ENCODE measurements at regions of chr18 and their contacts with region 1.

Region 1: GRCh38 chr18:74495581-74496507 is at the start of gene CNDP2:
- DNase-seq: peak; percentile 96 to 97 (median 96)
- H3K4me3 ChIP-seq: peak within 1 kb of the TSS; percentile 61 to 82
- H3K4me3 Mint-ChIP-seq: peak within 1 kb of the TSS; percentile 94 to 99 (median 96)
- H3K27ac ChIP-seq: peak within 1 kb of the TSS; percentile 92
- H3K27ac Mint-ChIP-seq: peak within 1 kb of the TSS; percentile 90 to 99 (median 99)
- H3K4me1 ChIP-seq: peaks cover 37% of the 10 kb centered on the region
- H3K4me1 Mint-ChIP-seq: peaks cover 31 to 58% (median 41%) of the 10 kb centered on the region in 4 donors
- H3K27me3 ChIP-seq: no peaks in the 10 kb centered on the region
- H3K27me3 Mint-ChIP-seq: no peaks in the 10 kb centered on the region
- total RNA-seq, gene CNDP2: 145 to 153 TPM

Region 2: DNA sequence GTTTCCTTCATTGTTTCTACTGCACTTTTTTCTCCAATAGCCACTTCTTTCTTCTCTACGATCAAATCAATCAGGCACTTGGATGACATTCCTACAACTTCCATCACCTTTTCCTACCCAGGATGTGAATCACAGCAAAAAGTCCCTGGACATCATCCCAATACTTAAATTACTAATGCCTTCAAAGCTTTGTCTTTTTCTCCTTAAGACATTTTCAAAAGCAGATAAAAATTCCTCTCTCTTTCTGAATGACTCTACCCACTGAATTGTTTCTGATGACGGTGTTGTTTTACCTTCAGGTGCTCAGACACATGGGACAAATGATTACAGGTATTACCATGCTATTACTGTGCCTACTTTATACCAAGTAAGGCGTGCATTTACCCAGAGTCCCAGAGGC is 849.1 kb before region 1 on chr18:
- CTCF ChIA-PET with region 1: no interaction called
- POLR2A ChIA-PET with region 1: no interaction called
- intact Hi-C with region 1: no loop called
- DNase-seq: no peak
- H3K4me3 ChIP-seq: no peak overlapping the region
- H3K4me3 Mint-ChIP-seq: no peak overlapping the region
- H3K27ac ChIP-seq: no peak overlapping the region
- H3K27ac Mint-ChIP-seq: no peak overlapping the region
- H3K4me1 ChIP-seq: no peaks in the 10 kb centered on the region
- H3K4me1 Mint-ChIP-seq: no peaks in the 10 kb centered on the region
- H3K27me3 ChIP-seq: no peaks in the 10 kb centered on the region
- H3K27me3 Mint-ChIP-seq: no peaks in the 10 kb centered on the region

Region 3: DNA sequence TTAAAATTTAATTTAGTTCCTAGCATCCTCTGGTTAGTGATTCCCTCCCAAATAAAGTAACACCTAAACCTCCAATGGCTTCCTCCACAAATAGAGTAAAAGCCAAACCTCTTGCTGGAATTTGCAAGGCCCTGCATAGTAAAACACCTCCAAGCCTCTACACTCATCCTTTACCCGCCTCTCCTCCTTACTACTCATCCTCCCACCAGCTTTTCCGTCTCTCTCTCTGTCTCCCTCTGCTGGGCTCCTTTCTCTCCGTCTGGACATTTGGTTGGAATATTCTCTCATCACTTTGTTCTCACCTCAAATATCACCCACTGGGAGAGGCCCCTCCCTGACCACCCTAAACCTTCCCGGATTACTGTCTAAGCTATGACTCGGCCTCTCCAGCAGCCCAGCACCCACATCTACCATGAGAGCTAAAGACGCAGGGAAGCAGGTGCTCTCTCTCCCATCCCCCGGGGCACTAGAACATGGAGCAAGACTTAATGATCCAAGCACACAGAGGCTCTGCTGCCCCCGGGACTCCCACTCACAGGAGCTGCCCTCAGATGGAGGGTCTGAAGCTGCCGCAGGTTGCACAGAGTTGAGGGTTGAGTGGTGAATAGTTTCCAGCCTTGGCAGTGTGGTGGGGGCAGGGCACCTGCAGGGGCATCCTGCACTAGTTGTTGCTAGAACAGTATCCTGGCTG is 515.4 kb before region 1 on chr18:
- CTCF ChIA-PET with region 1: no interaction called
- POLR2A ChIA-PET with region 1: no interaction called
- intact Hi-C with region 1: no loop called
- DNase-seq: no peak
- H3K4me3 ChIP-seq: no peak overlapping the region
- H3K4me3 Mint-ChIP-seq: no peak overlapping the region
- H3K27ac ChIP-seq: no peak overlapping the region
- H3K27ac Mint-ChIP-seq: peak overlapping the region in 1 of 7 donors; percentile 37
- H3K4me1 ChIP-seq: no peaks in the 10 kb centered on the region
- H3K4me1 Mint-ChIP-seq: no peaks in the 10 kb centered on the region
- H3K27me3 ChIP-seq: no peaks in the 10 kb centered on the region
- H3K27me3 Mint-ChIP-seq: peaks cover 4 to 8% of the 10 kb centered on the region in 2 donors

Region 4: GRCh38 chr18:74081966-74082741 is 413.7 kb before region 1 on chr18:
- CTCF ChIA-PET with region 1: no interaction called
- POLR2A ChIA-PET with region 1: interaction called, 4 read pairs
- intact Hi-C with region 1: loop called (anchors 5 kb)
- DNase-seq: peak; percentile 45 to 59 (median 59)
- H3K4me3 ChIP-seq: peak overlapping the region in 1 of 2 donors; percentile 15
- H3K4me3 Mint-ChIP-seq: peak overlapping the region; percentile 78 to 90 (median 84)
- H3K27ac ChIP-seq: peak overlapping the region; percentile 6
- H3K27ac Mint-ChIP-seq: peak overlapping the region; percentile 64 to 98 (median 90)
- H3K4me1 ChIP-seq: peaks cover 10% of the 10 kb centered on the region
- H3K4me1 Mint-ChIP-seq: peaks cover 10 to 16% (median 13%) of the 10 kb centered on the region in 4 donors
- H3K27me3 ChIP-seq: no peaks in the 10 kb centered on the region
- H3K27me3 Mint-ChIP-seq: no peaks in the 10 kb centered on the region

Region 5: DNA sequence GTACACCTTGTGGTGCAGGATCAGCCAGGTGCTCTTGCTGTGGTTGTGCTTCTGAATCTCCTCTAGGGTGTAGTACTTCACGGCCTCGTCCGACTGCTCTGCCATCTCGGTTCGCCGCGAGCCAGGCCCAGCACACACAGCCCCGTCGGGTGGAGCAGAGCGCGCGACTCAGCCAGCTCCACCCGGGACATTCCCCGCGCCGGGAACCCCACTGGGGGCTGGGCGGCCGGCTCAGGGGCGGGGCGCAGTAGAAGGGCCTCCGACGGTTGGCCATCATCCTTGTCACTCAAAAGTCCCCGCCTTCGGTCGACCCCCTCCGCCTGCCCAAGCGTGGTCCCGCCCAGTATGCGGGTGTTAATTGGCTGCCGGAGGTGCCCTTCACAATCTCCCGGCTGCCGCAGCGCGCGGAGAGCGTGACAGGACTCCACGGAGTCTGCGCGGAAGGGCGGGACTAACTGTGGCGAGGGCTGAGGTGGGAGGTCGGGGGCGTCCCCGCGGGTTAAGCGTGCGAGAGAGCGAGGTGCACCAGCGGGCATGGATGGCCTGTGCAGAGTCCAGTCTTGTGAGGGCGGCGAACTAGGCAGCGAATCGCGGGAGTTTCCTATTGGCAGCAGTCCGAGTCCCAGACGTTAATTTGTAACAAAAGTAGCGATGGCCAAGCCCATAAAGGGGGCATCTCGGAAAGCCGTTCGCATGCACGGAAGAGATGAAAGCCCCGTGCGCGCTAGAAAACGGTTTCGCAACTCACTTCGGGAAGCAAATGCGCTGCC is 203.9 kb before region 1 on chr18 and contains the start of gene CYB5A:
- CTCF ChIA-PET with region 1: no interaction called
- POLR2A ChIA-PET with region 1: no interaction called
- intact Hi-C with region 1: loop called (anchors 1 kb)
- DNase-seq: peak; percentile 97 to 99 (median 98)
- H3K4me3 ChIP-seq: peak within 1 kb of the TSS; percentile 90 to 98
- H3K4me3 Mint-ChIP-seq: peak within 1 kb of the TSS in 3 of 8 donors; percentile 95 to 99 (median 96)
- H3K27ac ChIP-seq: peak within 1 kb of the TSS; percentile 74
- H3K27ac Mint-ChIP-seq: peak within 1 kb of the TSS; percentile 65 to 98 (median 88)
- H3K4me1 ChIP-seq: peaks cover 13% of the 10 kb centered on the region
- H3K4me1 Mint-ChIP-seq: peaks cover 6 to 20% (median 11%) of the 10 kb centered on the region in 4 donors
- H3K27me3 ChIP-seq: no peaks in the 10 kb centered on the region
- H3K27me3 Mint-ChIP-seq: no peaks in the 10 kb centered on the region
- total RNA-seq, gene CYB5A: 22.8 to 27.0 TPM

Region 6: DNA sequence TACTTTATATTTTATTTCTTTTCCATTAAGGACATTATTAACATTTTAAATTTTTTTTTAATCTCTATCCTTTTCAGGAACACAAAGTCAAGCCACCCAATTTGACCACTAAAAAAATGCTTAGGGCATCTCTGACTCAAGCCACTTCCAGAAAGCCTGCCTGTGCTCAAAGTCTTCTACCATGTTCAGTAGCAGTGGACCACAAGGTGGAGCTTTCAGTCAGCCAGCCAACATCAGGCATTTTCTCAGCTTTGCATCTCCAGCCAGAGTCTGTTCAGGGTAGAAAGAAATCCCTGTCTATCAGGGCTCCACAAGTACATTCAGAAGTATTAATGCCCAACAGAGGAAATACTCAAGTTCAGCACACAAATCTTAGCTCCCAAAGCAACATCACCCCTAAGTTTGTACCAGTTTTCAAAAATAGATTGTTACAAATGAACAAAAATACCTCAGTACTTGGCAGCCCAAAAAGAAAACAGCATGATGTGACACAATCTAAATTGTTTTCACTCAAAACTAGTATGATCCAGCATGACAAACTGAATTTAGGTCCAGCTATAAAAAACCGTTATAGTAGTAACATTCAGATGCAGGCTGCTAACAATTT is 142.6 kb before region 1 on chr18:
- CTCF ChIA-PET with region 1: interaction called, 422 read pairs
- POLR2A ChIA-PET with region 1: interaction called, 36 read pairs
- intact Hi-C with region 1: loop called (anchors 1 kb)
- DNase-seq: peak; percentile 66 to 69 (median 67)
- H3K4me3 ChIP-seq: no peak overlapping the region
- H3K4me3 Mint-ChIP-seq: no peak overlapping the region
- H3K27ac ChIP-seq: no peak overlapping the region
- H3K27ac Mint-ChIP-seq: peak overlapping the region in 2 of 7 donors; percentile 11 to 58
- H3K4me1 ChIP-seq: peaks cover 9% of the 10 kb centered on the region
- H3K4me1 Mint-ChIP-seq: peaks cover 0 to 7% (median 5%) of the 10 kb centered on the region in 4 donors
- H3K27me3 ChIP-seq: no peaks in the 10 kb centered on the region
- H3K27me3 Mint-ChIP-seq: peaks cover 0 to 9% of the 10 kb centered on the region in 2 donors

Region 7: GRCh38 chr18:74506425-74507119 is 10.7 kb after region 1 on chr18:
- CTCF ChIA-PET with region 1: interaction called, 12 read pairs
- POLR2A ChIA-PET with region 1: interaction called, 4 read pairs
- intact Hi-C with region 1: no loop called
- DNase-seq: no peak
- H3K4me3 ChIP-seq: no peak overlapping the region
- H3K4me3 Mint-ChIP-seq: no peak overlapping the region
- H3K27ac ChIP-seq: no peak overlapping the region
- H3K27ac Mint-ChIP-seq: peak overlapping the region in 2 of 7 donors; percentile 37 to 86
- H3K4me1 ChIP-seq: no peaks in the 10 kb centered on the region
- H3K4me1 Mint-ChIP-seq: peaks cover 4 to 27% (median 12%) of the 10 kb centered on the region in 4 donors
- H3K27me3 ChIP-seq: no peaks in the 10 kb centered on the region
- H3K27me3 Mint-ChIP-seq: no peaks in the 10 kb centered on the region

Region 8: DNA sequence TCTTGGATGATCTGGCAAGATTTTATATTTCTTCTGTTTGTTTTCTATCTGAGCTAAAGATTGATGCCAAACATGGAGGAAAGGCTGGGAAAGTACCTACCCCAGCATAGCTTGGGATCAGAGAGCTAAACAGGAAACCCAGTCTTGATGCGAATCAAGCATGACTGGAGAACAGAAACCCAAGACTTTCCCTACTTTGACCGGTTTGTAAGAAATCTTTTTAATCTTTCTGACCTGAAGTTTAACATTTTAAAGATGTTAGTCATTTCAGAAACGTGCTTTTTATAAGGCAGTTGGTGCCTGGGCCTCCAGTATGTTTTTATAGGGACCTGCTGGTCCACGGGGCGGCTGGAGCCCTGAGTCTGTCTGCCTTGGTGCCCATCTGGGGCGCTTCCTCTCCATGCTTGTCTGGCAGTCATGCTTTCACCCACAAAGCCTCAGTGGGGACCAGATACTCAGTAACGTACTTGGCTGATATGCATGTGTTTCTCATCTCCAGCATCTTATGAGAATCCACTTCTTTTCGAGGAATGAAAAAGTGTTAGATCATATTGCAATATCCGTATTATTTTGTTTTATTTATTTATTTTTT is 446.6 kb after region 1 on chr18:
- CTCF ChIA-PET with region 1: no interaction called
- POLR2A ChIA-PET with region 1: no interaction called
- intact Hi-C with region 1: loop called (anchors 5 kb)
- DNase-seq: peak; percentile 18 to 56 (median 23)
- H3K4me3 ChIP-seq: no peak overlapping the region
- H3K4me3 Mint-ChIP-seq: peak overlapping the region; percentile 38 to 85 (median 78)
- H3K27ac ChIP-seq: peak overlapping the region; percentile 20
- H3K27ac Mint-ChIP-seq: peak overlapping the region; percentile 29 to 91 (median 81)
- H3K4me1 ChIP-seq: peaks cover 16% of the 10 kb centered on the region
- H3K4me1 Mint-ChIP-seq: peaks cover 13 to 34% (median 18%) of the 10 kb centered on the region in 4 donors
- H3K27me3 ChIP-seq: no peaks in the 10 kb centered on the region
- H3K27me3 Mint-ChIP-seq: no peaks in the 10 kb centered on the region

Region 9: DNA sequence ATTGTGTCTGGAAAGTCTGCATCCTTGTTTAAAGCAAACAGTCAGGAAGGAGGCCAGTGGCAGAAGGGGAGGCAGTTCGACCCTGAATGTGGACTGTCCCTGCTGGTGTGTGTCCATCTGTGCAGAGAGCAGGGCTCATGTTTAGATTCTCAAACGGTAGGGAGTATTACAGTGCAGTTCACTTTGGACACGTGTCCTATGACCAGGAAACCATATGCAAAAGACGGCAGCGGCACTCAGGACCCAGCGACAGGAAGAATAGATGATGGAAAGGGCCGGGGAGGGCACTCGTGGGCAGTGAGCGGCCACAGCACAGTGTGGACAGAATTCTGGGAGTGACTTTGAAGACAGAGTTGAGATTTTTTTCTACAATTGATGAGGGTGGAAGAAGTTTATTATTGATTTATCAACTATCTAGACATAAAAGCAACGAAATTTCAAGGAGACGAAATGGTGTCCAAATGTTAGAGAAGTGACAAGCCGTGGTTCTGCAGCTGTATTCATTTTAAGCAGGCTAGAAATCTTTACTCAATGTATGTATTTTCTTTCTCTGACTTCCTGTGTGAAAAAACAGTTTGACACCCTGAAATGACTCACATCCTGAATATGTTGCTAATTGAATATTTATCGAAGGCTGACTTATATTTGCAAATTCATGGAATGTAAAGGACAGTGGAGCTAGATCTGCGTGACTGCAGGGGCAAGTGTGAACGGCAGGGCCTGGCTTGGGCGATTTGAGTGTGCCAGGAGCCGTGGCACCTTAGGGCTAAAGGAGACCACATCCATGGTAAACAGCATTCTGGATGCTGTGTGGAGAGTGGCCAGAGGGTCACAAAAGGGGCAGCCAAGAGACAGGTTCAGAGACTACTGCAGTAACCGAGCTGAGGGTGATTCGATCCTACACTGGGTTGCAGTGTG is 498.9 kb after region 1 on chr18:
- CTCF ChIA-PET with region 1: no interaction called
- POLR2A ChIA-PET with region 1: no interaction called
- intact Hi-C with region 1: no loop called
- DNase-seq: peak; percentile 26 to 37 (median 36)
- H3K4me3 ChIP-seq: peak overlapping the region; percentile 2 to 42
- H3K4me3 Mint-ChIP-seq: peak overlapping the region; percentile 76 to 88 (median 82)
- H3K27ac ChIP-seq: peak overlapping the region; percentile 45
- H3K27ac Mint-ChIP-seq: peak overlapping the region; percentile 58 to 93 (median 85)
- H3K4me1 ChIP-seq: peaks cover 41% of the 10 kb centered on the region
- H3K4me1 Mint-ChIP-seq: peaks cover 34 to 59% (median 43%) of the 10 kb centered on the region in 4 donors
- H3K27me3 ChIP-seq: no peaks in the 10 kb centered on the region
- H3K27me3 Mint-ChIP-seq: no peaks in the 10 kb centered on the region

Region 10: GRCh38 chr18:75247611-75248421 is 752.0 kb after region 1 on chr18:
- CTCF ChIA-PET with region 1: no interaction called
- POLR2A ChIA-PET with region 1: no interaction called
- intact Hi-C with region 1: loop called (anchors 5 kb)
- DNase-seq: peak in 4 of 5 donors; percentile 51 to 61 (median 56)
- H3K4me3 ChIP-seq: peak overlapping the region; percentile 19 to 49
- H3K4me3 Mint-ChIP-seq: peak overlapping the region; percentile 80 to 91 (median 88)
- H3K27ac ChIP-seq: peak overlapping the region; percentile 46
- H3K27ac Mint-ChIP-seq: peak overlapping the region; percentile 88 to 98 (median 93)
- H3K4me1 ChIP-seq: peaks cover 51% of the 10 kb centered on the region
- H3K4me1 Mint-ChIP-seq: peaks cover 51 to 92% (median 70%) of the 10 kb centered on the region in 4 donors
- H3K27me3 ChIP-seq: no peaks in the 10 kb centered on the region
- H3K27me3 Mint-ChIP-seq: no peaks in the 10 kb centered on the region